Ascending aorta (tissue), 2 donors: ENCODE measurements at regions of chr5 and their contacts with region 1.

Region 1: GRCh38 chr5:120463991-120464626 is at the start of gene PRR16:
- DNase-seq: peak in 1 of 2 donors; percentile 76
- H3K4me3 ChIP-seq: peak within 1 kb of the TSS; percentile 72 to 83
- H3K27ac ChIP-seq: peak within 1 kb of the TSS; percentile 82 to 86
- H3K4me1 ChIP-seq: peaks cover 0 to 4% of the 10 kb centered on the region in 2 donors
- H3K27me3 ChIP-seq: no peaks in the 10 kb centered on the region
- CTCF ChIP-seq: peak in 1 of 3 experiments; percentile 73
- total RNA-seq, gene PRR16: 28.7 TPM

Region 2: GRCh38 chr5:119470851-119471451 is 993.2 kb before region 1 on chr5:
- intact Hi-C with region 1: loop called (anchors 5 kb)
- DNase-seq: no peak
- H3K4me3 ChIP-seq: no peak overlapping the region
- H3K27ac ChIP-seq: no peak overlapping the region
- H3K4me1 ChIP-seq: no peaks in the 10 kb centered on the region
- H3K27me3 ChIP-seq: no peaks in the 10 kb centered on the region
- CTCF ChIP-seq: peak; percentile 35 to 72 (median 58)

Region 3: GRCh38 chr5:119828541-119828940 is 635.6 kb before region 1 on chr5:
- intact Hi-C with region 1: loop called (anchors 10 kb)
- DNase-seq: no peak
- H3K4me3 ChIP-seq: peak overlapping the region in 1 of 2 donors; percentile 19
- H3K27ac ChIP-seq: peak overlapping the region; percentile 58 to 69
- H3K4me1 ChIP-seq: peaks cover 6 to 28% of the 10 kb centered on the region in 2 donors
- H3K27me3 ChIP-seq: no peaks in the 10 kb centered on the region
- CTCF ChIP-seq: no peak

Region 4: DNA sequence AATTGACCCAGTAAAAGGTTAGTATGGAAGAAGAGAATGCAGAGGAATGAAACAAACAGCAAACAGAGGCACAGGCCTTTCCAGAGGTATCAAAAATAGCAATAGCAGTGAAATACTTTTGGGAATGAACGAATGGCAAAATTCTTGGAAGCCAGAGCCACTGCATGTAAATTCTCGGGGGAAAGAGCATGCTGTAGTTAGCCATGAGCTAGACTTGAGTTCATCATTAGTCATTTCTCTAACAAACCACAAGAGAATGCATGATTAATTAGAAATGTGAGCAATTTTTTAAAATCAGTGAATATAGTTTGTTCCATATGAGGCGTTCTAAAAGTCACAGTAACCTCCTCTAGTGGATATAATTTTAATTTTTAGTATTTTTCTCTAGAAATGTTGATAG is 170.3 kb before region 1 on chr5:
- intact Hi-C with region 1: loop called (anchors 5 kb)
- DNase-seq: no peak
- H3K4me3 ChIP-seq: no peak overlapping the region
- H3K27ac ChIP-seq: no peak overlapping the region
- H3K4me1 ChIP-seq: no peaks in the 10 kb centered on the region
- H3K27me3 ChIP-seq: no peaks in the 10 kb centered on the region
- CTCF ChIP-seq: no peak

Region 5: DNA sequence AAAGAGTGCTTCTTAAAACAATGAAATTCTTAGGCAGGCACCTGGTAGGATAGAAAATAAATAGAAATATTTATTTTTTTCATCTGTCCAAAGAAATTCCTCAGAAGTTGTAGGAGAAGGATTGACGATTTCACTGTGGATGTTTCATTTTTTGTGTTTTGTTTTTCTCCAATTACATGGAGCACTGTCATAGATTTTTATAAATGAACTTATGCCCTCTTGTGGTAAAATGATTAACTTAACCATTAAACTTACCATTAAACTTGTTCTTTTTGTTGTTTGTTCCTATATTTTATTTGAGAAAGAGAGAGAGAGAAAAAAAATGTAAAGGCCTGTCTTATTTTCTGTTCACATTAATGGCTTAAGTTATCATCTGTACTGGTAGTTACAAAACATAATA is 339.2 kb after region 1 on chr5:
- intact Hi-C with region 1: loop called (anchors 5 kb)
- DNase-seq: no peak
- H3K4me3 ChIP-seq: no peak overlapping the region
- H3K27ac ChIP-seq: no peak overlapping the region
- H3K4me1 ChIP-seq: no peaks in the 10 kb centered on the region
- H3K27me3 ChIP-seq: no peaks in the 10 kb centered on the region
- CTCF ChIP-seq: peak in 2 of 3 experiments; percentile 19 to 38

Region 6: GRCh38 chr5:121408778-121409177 is 944.7 kb after region 1 on chr5:
- intact Hi-C with region 1: no loop called
- DNase-seq: no peak
- H3K4me3 ChIP-seq: no peak overlapping the region
- H3K27ac ChIP-seq: no peak overlapping the region
- H3K4me1 ChIP-seq: no peaks in the 10 kb centered on the region
- H3K27me3 ChIP-seq: no peaks in the 10 kb centered on the region
- CTCF ChIP-seq: no peak